Gastrocnemius medialis (tissue), 4 donors: ENCODE measurements at regions of chr15 and their contacts with region 1.

Region 1: GRCh38 chr15:99928429-99928981 is 195.3 kb upstream of the LYSMD4 start:
- DNase-seq: peak; percentile 64
- ATAC-seq: peak; percentile 88 to 91
- H3K4me3 ChIP-seq: peak overlapping the region; percentile 32 to 76 (median 46)
- H3K27ac ChIP-seq: peak overlapping the region; percentile 39 to 84 (median 61)
- H3K4me1 ChIP-seq: peaks cover 0 to 6% of the 10 kb centered on the region in 2 donors
- H3K27me3 ChIP-seq: no peaks in the 10 kb centered on the region
- CTCF ChIP-seq: peak; percentile 25 to 78 (median 72)
- POLR2A ChIP-seq: no peak

Region 2: DNA sequence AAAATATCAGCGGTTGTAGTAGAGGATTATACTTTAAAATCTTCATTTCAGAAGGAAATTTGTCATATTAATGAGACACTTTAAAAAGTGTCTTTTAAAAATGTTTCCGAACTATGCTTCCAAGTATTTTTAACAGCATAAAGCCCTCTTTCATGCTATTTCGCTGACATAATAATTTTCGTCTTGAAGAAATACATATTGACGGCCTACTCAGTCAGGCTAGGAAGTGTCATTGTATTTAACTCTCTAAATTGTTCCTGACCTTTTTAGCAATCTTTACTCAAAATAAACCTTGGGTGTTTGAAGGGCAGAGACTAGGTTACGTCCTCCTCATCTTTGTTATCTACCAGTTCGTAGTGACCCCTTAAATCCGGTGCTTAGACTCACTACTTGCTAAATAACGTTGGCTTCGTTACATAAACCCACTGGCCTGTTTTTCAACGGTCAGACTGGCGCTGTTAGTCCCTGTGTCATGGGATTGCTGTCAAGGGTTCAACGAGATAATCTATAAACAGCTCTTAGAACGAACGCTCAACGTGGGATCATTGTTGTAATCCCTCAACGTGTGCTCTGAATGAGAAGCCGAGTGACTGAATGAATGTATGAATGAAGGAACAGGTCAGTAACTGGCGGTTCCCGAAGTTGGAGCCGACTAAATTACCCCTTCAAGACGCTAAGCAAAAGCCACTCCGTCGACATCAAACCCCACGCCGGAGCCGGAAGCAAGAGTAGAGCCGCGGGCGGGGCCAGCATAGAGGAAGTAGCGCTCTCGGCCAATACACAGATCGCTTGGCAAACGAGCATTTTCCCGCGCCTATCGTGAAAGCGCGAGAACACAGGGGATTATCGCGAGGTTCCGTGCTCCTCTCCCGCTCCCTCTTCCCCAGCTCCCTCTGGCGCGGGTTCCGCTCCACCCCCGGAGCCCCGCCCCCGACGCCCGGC is 677.7 kb before region 1 on chr15:
- in situ Hi-C with region 1: no loop called
- intact Hi-C with region 1: loop called (anchors 10 kb)
- DNase-seq: peak; percentile 98 to 99
- ATAC-seq: peak; percentile 94 to 95
- H3K4me3 ChIP-seq: peak overlapping the region; percentile 53 to 89 (median 84)
- H3K27ac ChIP-seq: peak overlapping the region; percentile 93 to 96 (median 96)
- H3K4me1 ChIP-seq: peaks cover 34 to 40% of the 10 kb centered on the region in 2 donors
- H3K27me3 ChIP-seq: no peaks in the 10 kb centered on the region
- CTCF ChIP-seq: no peak
- POLR2A ChIP-seq: peak; percentile 89 to 96

Region 3: DNA sequence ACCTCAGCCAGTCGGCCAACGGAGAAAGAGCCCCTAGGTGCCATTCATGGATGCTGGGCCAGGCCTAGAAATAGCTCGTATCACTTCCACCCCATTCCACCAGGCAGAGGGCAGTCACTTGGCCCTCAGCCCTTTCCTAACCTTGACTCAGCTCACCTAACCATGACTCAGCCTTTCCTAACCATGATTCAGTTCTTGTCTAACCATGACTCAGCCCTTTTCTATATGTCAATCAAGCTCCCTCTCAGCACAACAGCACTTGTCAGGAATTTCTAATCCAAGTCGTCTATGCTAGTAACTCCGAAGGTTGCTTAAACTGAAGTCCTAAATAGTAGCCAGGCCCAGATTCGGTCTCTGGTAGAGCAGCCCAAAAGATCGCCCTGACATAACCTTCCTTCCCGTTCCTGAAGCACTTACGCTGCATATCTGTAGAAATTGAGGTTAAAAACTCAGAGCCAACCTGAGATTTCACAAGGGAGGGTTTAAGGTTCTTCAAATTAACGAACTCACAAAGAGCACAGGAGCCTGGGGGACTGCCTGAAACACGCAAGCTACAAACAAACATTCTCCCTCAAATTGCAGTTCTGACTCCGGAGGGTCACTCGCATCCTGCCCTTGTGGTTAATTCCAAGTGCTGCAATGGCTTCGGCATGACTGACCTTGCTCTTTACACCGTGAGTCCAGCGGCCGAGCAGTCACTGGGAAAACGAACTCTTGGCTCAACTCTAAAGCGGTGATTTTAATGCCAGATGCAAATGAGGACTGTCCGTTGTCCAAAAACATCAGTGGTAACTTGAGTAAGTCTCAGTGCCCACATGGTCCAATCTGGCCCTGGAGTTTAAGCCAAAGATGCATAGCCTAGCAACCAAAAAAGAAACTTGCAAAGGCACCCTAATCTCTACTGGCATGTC is 313.3 kb after region 1 on chr15:
- in situ Hi-C with region 1: loop called in 1 of 4 experiments (anchors 10 kb)
- intact Hi-C with region 1: no loop called
- DNase-seq: peak in 1 of 2 donors; percentile 41
- ATAC-seq: peak; percentile 88 to 90
- H3K4me3 ChIP-seq: peak overlapping the region in 1 of 4 donors; percentile 13
- H3K27ac ChIP-seq: peak overlapping the region; percentile 63 to 76 (median 72)
- H3K4me1 ChIP-seq: peaks cover 4 to 15% of the 10 kb centered on the region in 2 donors
- H3K27me3 ChIP-seq: no peaks in the 10 kb centered on the region
- CTCF ChIP-seq: no peak
- POLR2A ChIP-seq: no peak

Region 4: GRCh38 chr15:100572362-100572983 is 644.0 kb after region 1 on chr15:
- in situ Hi-C with region 1: loop called (anchors 25 kb)
- intact Hi-C with region 1: loop called (anchors 10 kb)
- DNase-seq: no peak
- ATAC-seq: peak in 1 of 2 donors; percentile 36
- H3K4me3 ChIP-seq: no peak overlapping the region
- H3K27ac ChIP-seq: no peak overlapping the region
- H3K4me1 ChIP-seq: peaks cover 0 to 9% of the 10 kb centered on the region in 2 donors
- H3K27me3 ChIP-seq: no peaks in the 10 kb centered on the region
- CTCF ChIP-seq: peak; percentile 51 to 69 (median 61)
- POLR2A ChIP-seq: no peak

Region 5: DNA sequence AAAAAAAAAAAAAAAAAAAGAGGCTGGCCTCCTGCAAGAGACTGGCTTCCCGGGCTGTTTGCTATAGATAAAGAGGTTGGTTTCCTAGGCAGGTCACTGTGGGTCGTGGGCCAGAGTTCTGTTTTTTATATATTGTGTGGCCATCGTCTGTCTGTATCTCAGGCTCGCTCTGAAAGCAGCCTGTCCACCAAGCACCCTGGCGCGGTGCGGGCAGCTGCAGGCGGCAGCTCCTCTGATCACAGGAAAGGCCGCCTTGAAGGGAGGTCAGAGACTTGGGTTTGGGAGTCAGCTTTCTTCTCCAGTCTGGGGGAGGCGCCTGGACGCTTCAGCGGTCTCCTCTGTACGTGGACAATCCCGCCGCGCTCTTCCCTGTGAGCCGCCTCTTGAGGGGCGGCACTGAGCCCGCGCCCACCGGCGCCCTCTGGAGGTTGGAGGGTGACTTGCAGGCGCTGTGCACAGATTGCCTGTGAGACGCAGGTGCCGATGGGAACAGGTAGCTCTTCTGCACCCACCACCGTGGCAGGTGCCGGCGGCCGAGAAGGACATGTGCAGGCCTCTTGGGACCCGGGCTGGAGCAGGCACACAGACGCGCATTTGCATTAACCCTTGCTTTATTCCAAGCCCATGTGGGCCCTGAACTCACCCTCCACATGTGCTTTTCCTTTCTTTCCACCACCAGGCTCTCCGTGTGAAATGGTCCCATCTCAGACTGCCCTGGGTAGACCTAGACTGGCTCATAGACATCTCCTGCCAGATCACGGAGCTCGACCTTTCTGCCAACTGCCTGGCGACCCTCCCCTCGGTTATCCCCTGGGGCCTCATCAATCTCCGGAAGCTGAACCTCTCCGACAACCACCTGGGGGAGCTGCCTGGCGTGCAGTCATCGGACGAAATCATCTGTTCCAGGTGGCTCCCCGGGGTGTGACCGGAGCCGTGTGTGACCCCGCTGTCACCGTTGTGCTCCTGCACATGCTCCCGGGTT is 1079.9 kb after region 1 on chr15:
- in situ Hi-C with region 1: loop called in 1 of 4 experiments (anchors 25 kb)
- intact Hi-C with region 1: no loop called
- DNase-seq: peak; percentile 35 to 61
- ATAC-seq: peak; percentile 63 to 84
- H3K4me3 ChIP-seq: peak overlapping the region; percentile 38 to 70 (median 52)
- H3K27ac ChIP-seq: no peak overlapping the region
- H3K4me1 ChIP-seq: no peaks in the 10 kb centered on the region
- H3K27me3 ChIP-seq: no peaks in the 10 kb centered on the region
- CTCF ChIP-seq: peak; percentile 58 to 97 (median 88)
- POLR2A ChIP-seq: no peak